Ascending aorta (tissue), 2 donors: ENCODE measurements at regions of chr11 and their contacts with region 1.

Region 1: GRCh38 chr11:77370226-77370625 is 68.7 kb upstream of the GDPD4 start:
- DNase-seq: no peak
- H3K4me3 ChIP-seq: no peak overlapping the region
- H3K27ac ChIP-seq: no peak overlapping the region
- H3K4me1 ChIP-seq: no peaks in the 10 kb centered on the region
- H3K27me3 ChIP-seq: no peaks in the 10 kb centered on the region
- CTCF ChIP-seq: no peak

Region 2: GRCh38 chr11:77547863-77548551 is 177.8 kb after region 1 on chr11:
- intact Hi-C with region 1: loop called (anchors 10 kb)
- DNase-seq: no peak
- H3K4me3 ChIP-seq: no peak overlapping the region
- H3K27ac ChIP-seq: no peak overlapping the region
- H3K4me1 ChIP-seq: no peaks in the 10 kb centered on the region
- H3K27me3 ChIP-seq: no peaks in the 10 kb centered on the region
- CTCF ChIP-seq: peak; percentile 30 to 67 (median 31)